H1 (cell line): ENCODE measurements at regions of chr12 and their contacts with region 1.

Region 1: GRCh38 chr12:67355578-67356379 is 86.6 kb downstream of the CAND1 start:
- DNase-seq: peak in 1 of 2 experiments; percentile 17
- H3K4me3 ChIP-seq: no peak overlapping the region
- H3K27ac ChIP-seq: no peak overlapping the region
- H3K4me1 ChIP-seq: no peaks in the 10 kb centered on the region; a peak in 1 of 7 replicates
- H3K27me3 ChIP-seq: no peaks in the 10 kb centered on the region
- CTCF ChIP-seq: peak in 2 of 3 experiments; percentile 38 to 51; a peak in 2 of 4 replicates
- EP300 ChIP-seq: no peak
- POLR2A ChIP-seq: no peak
- RAD21 ChIP-seq: peak; percentile 79 to 80

Region 2: GRCh38 chr12:67161322-67161918 is 194.4 kb before region 1 on chr12:
- CTCF ChIA-PET with region 1: no interaction called
- POLR2A ChIA-PET with region 1: no interaction called
- DNase-seq: peak in 1 of 2 experiments; percentile 61
- H3K4me3 ChIP-seq: no peak overlapping the region
- H3K27ac ChIP-seq: no peak overlapping the region
- H3K4me1 ChIP-seq: no peaks in the 10 kb centered on the region
- H3K27me3 ChIP-seq: no peaks in the 10 kb centered on the region
- CTCF ChIP-seq: peak in 2 of 3 experiments; percentile 55 to 70; a peak in 3 of 4 replicates
- EP300 ChIP-seq: no peak
- POLR2A ChIP-seq: no peak
- RAD21 ChIP-seq: peak; percentile 56 to 68

Region 3: DNA sequence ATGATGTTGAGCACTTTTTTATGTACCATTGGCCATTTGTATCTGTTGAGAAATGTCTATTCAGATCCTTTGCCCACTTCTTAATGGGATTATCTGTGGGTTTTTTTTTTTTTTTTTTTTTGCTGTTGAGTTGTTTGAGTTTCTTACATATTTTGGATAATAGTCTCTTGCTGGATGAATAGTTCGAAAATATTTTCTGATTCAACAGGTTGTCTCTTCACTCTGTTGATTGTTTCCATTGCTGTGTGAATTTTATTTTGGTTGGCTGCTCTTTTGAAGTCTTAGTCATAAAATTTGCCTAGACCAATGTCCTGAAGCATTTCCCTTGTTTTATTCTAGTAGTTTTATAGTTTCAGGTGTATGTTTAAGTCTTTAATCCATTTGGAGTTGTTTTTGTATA is 22.1 kb before region 1 on chr12:
- CTCF ChIA-PET with region 1: no interaction called
- POLR2A ChIA-PET with region 1: no interaction called
- DNase-seq: no peak
- H3K4me3 ChIP-seq: no peak overlapping the region
- H3K27ac ChIP-seq: no peak overlapping the region
- H3K4me1 ChIP-seq: no peaks in the 10 kb centered on the region
- H3K27me3 ChIP-seq: no peaks in the 10 kb centered on the region
- CTCF ChIP-seq: no peak
- EP300 ChIP-seq: no peak
- POLR2A ChIP-seq: no peak
- RAD21 ChIP-seq: no peak

Region 4: GRCh38 chr12:67344979-67345710 is 10.6 kb before region 1 on chr12:
- CTCF ChIA-PET with region 1: interaction called, 20 read pairs
- POLR2A ChIA-PET with region 1: interaction called, 4 read pairs
- DNase-seq: no peak
- H3K4me3 ChIP-seq: no peak overlapping the region
- H3K27ac ChIP-seq: no peak overlapping the region
- H3K4me1 ChIP-seq: no peaks in the 10 kb centered on the region
- H3K27me3 ChIP-seq: no peaks in the 10 kb centered on the region
- CTCF ChIP-seq: no peak
- EP300 ChIP-seq: no peak
- POLR2A ChIP-seq: no peak
- RAD21 ChIP-seq: no peak

Region 5: DNA sequence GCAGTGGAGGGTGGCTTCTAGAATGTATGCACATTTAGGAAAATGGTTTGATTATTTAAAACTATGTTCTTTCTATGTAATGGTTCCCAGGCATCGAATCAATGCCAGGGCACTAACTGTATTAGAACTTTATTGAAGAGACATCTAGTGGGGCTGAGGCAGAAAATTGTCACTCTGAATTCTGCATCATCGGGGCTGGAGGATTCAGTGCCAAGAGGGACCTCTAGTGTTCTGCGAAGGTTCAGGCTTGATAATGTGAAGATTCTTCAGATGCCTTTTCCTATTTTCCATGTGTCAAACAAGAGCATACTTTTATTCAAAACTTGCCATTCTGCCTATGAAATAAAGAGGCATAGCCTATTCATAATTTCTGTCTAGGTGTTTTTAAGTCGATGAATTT is 59.7 kb after region 1 on chr12:
- CTCF ChIA-PET with region 1: interaction called, 45 read pairs
- POLR2A ChIA-PET with region 1: no interaction called
- DNase-seq: no peak
- H3K4me3 ChIP-seq: no peak overlapping the region
- H3K27ac ChIP-seq: no peak overlapping the region
- H3K4me1 ChIP-seq: peaks cover 3 to 25% (median 23%) of the 10 kb centered on the region in 4 experiments; a peak in 6 of 7 replicates
- H3K27me3 ChIP-seq: no peaks in the 10 kb centered on the region
- CTCF ChIP-seq: peak; percentile 30 to 73 (median 73)
- EP300 ChIP-seq: no peak
- POLR2A ChIP-seq: no peak
- RAD21 ChIP-seq: peak; percentile 85 to 86

Region 6: GRCh38 chr12:67433385-67434175 is 77.8 kb after region 1 on chr12:
- CTCF ChIA-PET with region 1: interaction called, 19 read pairs
- POLR2A ChIA-PET with region 1: no interaction called
- DNase-seq: no peak
- H3K4me3 ChIP-seq: no peak overlapping the region
- H3K27ac ChIP-seq: no peak overlapping the region
- H3K4me1 ChIP-seq: no peaks in the 10 kb centered on the region
- H3K27me3 ChIP-seq: no peaks in the 10 kb centered on the region
- CTCF ChIP-seq: no peak
- EP300 ChIP-seq: no peak
- POLR2A ChIP-seq: no peak
- RAD21 ChIP-seq: no peak

Region 7: DNA sequence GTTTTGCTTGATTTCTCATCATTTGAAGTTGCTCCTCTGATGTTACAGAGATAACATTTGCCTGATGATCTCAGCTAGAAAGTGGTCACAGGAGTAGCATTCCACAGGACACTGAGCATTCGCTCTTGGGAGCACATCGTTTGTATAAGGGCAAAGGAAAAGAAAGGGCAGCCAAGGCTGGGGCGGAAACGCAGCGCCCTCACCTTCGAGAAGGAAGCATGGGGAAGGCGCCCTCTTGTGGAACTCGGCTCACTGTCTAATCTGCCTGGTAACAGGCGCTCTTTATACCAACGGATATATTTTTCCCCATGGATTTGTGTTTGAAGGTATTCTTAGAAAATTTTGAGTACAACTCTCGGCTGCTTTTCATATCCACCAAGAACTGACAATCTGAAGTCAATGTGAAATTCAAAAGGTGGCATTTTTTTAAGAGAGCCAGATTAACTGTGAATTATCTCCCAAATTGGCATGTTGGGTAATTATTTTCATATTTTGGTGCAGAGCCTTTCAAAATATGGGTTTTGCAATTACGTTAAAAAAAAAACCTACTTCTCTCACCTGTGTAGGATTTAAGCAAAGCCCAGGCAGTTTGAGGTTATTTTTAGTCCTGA is 86.1 kb after region 1 on chr12:
- CTCF ChIA-PET with region 1: interaction called, 28 read pairs
- POLR2A ChIA-PET with region 1: no interaction called
- DNase-seq: peak; percentile 41 to 87
- H3K4me3 ChIP-seq: no peak overlapping the region
- H3K27ac ChIP-seq: no peak overlapping the region
- H3K4me1 ChIP-seq: peaks cover 0 to 4% (median 0%) of the 10 kb centered on the region in 4 experiments; a peak in 1 of 7 replicates
- H3K27me3 ChIP-seq: no peaks in the 10 kb centered on the region; a peak in 1 of 7 replicates
- CTCF ChIP-seq: peak; percentile 77 to 81 (median 79)
- EP300 ChIP-seq: no peak
- POLR2A ChIP-seq: no peak
- RAD21 ChIP-seq: peak; percentile 77 to 81

Region 8: GRCh38 chr12:67484791-67485480 is 129.2 kb after region 1 on chr12:
- CTCF ChIA-PET with region 1: no interaction called
- POLR2A ChIA-PET with region 1: no interaction called
- DNase-seq: no peak
- H3K4me3 ChIP-seq: no peak overlapping the region
- H3K27ac ChIP-seq: no peak overlapping the region
- H3K4me1 ChIP-seq: no peaks in the 10 kb centered on the region
- H3K27me3 ChIP-seq: no peaks in the 10 kb centered on the region
- CTCF ChIP-seq: no peak
- EP300 ChIP-seq: no peak
- POLR2A ChIP-seq: no peak
- RAD21 ChIP-seq: no peak